HCT116 (cell line): ENCODE measurements at regions of chr14 and their contacts with region 1.

Region 1: DNA sequence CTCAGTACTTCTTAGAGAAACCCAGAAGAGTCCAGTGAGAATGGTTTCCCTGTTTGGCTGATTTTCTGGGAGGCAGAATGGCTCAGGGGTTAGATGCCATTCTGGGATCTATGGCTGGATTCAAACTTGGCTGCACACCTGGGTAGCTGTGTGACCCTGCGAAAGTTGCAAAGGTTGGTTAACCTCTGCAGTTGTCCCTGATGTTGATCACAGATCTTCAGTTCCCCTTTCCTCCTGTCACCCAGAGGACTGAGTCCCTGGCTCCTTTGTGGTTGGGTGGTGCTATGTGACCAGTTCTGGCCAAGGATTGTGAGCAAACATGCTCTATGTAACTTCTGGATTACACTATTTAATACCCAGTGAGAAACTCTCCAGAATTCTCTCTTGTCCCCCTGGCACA is 418.0 kb downstream of the RGS6 start:
- DNase-seq: no peak
- ATAC-seq: no peak
- H3K4me3 ChIP-seq: no peak overlapping the region
- H3K27ac ChIP-seq: no peak overlapping the region
- H3K4me1 ChIP-seq: no peaks in the 10 kb centered on the region
- H3K27me3 ChIP-seq: no peaks in the 10 kb centered on the region
- CTCF ChIP-seq: no peak
- POLR2A ChIP-seq: no peak
- RAD21 ChIP-seq: no peak

Region 2: DNA sequence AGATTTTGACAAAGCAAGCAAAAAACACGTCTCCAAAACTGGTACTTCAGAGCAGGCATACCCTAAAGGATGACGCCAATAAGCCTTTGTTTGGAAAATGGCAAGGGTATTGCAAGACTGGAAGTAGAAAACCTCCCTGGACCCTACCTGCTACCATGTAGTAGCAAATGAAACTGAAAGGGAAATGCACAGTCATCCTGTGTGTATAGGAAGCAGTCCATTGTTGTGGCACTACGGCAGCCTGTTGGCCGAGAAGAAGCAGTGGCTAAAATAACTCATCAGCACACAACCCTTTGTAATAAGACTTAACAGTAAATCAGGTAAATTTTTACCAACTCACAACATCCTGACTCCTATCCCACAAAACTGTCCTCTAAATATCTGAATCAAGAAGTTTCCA is 31.6 kb before region 1 on chr14:
- CTCF ChIA-PET with region 1: no interaction called
- POLR2A ChIA-PET with region 1: no interaction called
- RAD21 ChIA-PET with region 1: no interaction called
- intact Hi-C with region 1: loop called (anchors 1 kb)
- DNase-seq: no peak
- ATAC-seq: no peak
- H3K4me3 ChIP-seq: no peak overlapping the region
- H3K27ac ChIP-seq: no peak overlapping the region
- H3K4me1 ChIP-seq: no peaks in the 10 kb centered on the region
- H3K27me3 ChIP-seq: no peaks in the 10 kb centered on the region
- CTCF ChIP-seq: no peak
- POLR2A ChIP-seq: no peak
- RAD21 ChIP-seq: no peak